ENCODE measurements at regions of chr17 and their contacts with region 1.

Region 1: GRCh38 chr17:71633391-71633849 is 487.4 kb upstream of the SOX9 start:
- DNase-seq: peak; percentile 65 to 97
- H3K4me3 ChIP-seq: no peak overlapping the region; the same call in 1 of the 2 replicates
- H3K27ac ChIP-seq: peak overlapping the region; percentile 72
- H3K4me1 ChIP-seq: peaks cover 35% of the 10 kb centered on the region
- H3K27me3 ChIP-seq: no peaks in the 10 kb centered on the region
- CTCF ChIP-seq: no peak

Region 2: GRCh38 chr17:71188811-71189492 is 444.5 kb before region 1 on chr17:
- CTCF ChIA-PET with region 1: no interaction called
- POLR2A ChIA-PET with region 1: no interaction called
- intact Hi-C with region 1: loop called (anchors 2 kb)
- DNase-seq: peak; percentile 20 to 91
- H3K4me3 ChIP-seq: peak overlapping the region; percentile 24; the same call in 1 of the 2 replicates
- H3K27ac ChIP-seq: peak overlapping the region; percentile 95
- H3K4me1 ChIP-seq: peaks cover 25% of the 10 kb centered on the region
- H3K27me3 ChIP-seq: no peaks in the 10 kb centered on the region
- CTCF ChIP-seq: no peak

Region 3: DNA sequence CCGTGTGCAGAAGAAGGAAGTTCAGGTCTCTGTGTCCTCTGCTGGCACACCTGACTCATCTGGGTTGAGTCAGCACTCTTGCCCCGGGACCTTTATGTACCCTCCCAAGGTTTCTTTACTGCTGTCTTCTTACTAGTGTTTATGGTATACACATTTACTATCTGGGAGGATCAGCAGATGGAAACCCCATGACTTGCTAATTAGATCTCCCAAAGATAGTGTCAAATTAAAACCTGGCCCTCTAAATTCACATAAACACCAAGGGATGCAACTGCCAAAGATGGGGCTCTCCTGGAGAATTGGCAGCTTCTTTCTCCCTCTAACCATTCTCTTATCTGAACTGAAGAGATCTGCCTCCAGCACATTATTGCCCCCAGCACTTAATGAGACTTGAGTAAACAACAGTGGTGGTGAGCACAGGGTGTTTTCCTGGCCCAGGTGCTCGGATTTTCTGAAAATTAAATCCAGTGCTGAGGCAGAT is 230.7 kb before region 1 on chr17:
- CTCF ChIA-PET with region 1: no interaction called
- POLR2A ChIA-PET with region 1: no interaction called
- intact Hi-C with region 1: no loop called
- DNase-seq: peak; percentile 41 to 72
- H3K4me3 ChIP-seq: no peak overlapping the region
- H3K27ac ChIP-seq: peak overlapping the region; percentile 86
- H3K4me1 ChIP-seq: peaks cover 46% of the 10 kb centered on the region
- H3K27me3 ChIP-seq: no peaks in the 10 kb centered on the region
- CTCF ChIP-seq: no peak

Region 4: DNA sequence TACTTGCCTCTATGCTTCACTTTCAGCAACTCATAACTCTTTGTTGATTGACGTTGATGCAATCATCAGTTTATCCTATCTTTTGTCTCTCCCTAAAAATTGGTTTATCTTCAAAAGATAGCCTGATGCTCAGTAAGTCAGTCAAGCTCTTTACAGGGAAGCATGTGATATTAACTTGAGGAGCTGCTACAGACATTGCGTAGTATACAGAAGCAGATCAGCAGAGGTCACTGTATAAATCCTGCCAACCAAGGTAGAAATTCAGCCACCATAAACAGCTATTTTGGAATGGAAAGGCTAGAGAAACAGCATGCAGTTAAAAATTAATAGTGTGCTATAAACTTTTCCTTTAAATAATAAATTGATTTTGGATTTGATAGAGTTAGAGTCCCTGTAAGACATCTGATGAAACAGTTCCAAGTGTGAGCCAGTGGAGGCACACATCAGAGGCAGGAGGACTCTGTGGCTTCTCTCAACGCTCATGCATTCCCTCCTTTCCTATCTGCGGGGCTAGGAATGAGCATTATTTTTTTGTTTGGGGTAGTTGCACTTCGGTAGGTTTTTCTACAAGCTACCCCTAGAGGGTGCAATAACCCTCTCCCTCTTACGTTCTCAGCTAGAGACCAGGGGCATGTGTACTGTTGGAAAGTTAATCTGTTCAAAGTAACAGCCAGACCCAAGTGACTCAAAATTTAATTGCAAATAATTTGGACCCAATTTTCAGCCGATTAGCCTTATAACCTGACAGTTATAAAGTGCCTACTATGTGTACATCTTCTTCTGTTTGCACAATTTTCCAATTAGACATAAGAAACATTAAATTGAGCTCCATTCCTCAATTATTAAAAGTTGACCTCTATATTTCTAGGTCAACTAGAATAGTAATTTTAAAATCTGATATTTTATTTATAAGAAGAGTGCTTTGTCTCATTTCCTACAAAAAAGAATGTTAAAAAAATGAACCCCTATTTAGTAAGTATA is 160.3 kb before region 1 on chr17:
- CTCF ChIA-PET with region 1: no interaction called
- POLR2A ChIA-PET with region 1: no interaction called
- intact Hi-C with region 1: loop called (anchors 1 kb)
- DNase-seq: peak; percentile 18 to 45
- H3K4me3 ChIP-seq: no peak overlapping the region
- H3K27ac ChIP-seq: no peak overlapping the region
- H3K4me1 ChIP-seq: no peaks in the 10 kb centered on the region
- H3K27me3 ChIP-seq: no peaks in the 10 kb centered on the region
- CTCF ChIP-seq: peak; percentile 76

Region 5: DNA sequence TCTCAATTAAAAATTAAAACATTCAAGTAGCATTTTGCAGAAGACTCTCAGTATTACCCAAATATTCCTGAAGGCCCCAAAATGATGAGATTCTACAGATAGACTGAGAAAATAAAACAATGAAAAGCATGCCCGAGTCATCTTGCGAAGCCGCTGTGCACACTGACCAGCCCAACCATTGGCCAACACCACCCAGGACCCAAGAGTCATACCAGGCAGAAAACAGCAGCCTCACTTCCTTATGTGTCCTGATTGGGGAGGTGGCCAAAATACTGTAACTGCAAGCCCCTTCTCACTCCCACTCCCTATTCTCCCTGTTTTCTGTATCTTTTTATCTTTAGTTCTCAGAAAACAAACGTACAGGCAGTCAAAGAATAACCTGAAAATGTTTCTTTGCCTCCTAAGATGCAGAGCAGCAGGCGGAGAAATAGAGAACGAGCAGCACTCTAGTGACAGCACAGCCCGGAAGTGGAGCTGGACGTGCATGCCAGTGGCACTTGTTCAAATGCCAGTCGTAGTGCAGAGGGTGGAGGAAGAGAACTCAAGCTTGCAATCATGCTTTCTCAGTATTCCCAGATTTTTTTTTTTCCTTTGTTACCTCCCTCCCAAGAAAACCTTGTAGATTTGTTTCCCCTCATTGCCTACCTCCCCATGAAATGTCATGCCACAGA is 305.1 kb after region 1 on chr17:
- CTCF ChIA-PET with region 1: no interaction called
- POLR2A ChIA-PET with region 1: no interaction called
- intact Hi-C with region 1: loop called (anchors 2 kb)
- DNase-seq: no peak
- H3K4me3 ChIP-seq: no peak overlapping the region
- H3K27ac ChIP-seq: no peak overlapping the region
- H3K4me1 ChIP-seq: peaks cover 34% of the 10 kb centered on the region
- H3K27me3 ChIP-seq: no peaks in the 10 kb centered on the region
- CTCF ChIP-seq: no peak

Region 6: DNA sequence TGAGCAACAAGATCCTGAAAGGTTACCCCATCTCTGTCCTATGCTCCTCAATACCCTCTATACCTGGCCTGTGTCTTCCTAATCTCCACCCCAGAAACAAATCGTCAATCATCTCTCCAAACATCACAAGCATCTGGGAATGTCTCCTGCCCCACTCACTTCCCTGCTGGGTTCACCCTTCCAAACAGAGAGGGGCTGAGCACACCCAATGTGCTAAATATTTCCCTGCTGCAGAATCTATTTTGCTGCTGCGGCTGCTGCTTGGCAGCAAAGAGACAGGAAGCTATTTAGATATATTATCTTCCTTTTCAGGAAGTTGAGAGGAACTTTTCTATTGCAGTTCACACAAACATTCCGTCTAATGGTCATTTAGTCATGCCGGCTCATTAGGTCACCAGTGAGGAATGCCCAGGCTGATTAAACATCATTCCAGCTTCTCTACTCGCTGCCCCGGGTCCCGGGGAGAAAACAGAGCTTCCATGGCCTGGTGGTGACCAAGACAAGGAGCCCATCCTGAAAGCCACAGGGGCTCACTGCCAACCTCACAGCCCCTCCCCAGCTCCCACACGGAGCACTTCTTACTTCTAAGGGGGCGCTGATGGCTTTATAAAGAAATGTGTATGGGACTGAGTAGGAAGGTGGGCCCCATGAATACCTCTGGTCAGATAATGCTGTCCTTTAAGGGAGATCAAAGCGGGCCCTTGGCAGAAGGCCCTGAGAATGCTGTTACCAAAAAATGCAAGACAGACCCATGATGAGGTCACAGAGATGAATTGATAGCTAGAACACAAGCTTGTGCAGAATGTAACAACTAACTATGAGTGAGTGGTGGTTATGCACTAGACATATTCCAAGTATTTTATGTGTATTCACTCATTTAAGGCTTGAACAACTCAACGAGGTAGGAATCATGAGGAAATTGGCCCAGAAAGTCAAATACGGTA is 705.7 kb after region 1 on chr17:
- CTCF ChIA-PET with region 1: no interaction called
- POLR2A ChIA-PET with region 1: no interaction called
- intact Hi-C with region 1: loop called (anchors 2 kb)
- DNase-seq: peak; percentile 81 to 97
- H3K4me3 ChIP-seq: no peak overlapping the region; the same call in 1 of the 2 replicates
- H3K27ac ChIP-seq: peak overlapping the region; percentile 88
- H3K4me1 ChIP-seq: peaks cover 34% of the 10 kb centered on the region
- H3K27me3 ChIP-seq: no peaks in the 10 kb centered on the region
- CTCF ChIP-seq: no peak

Measured in PC-9 (cell line).